Caco-2 (cell line): ENCODE measurements at regions of chr22 and their contacts with region 1.

Region 1: DNA sequence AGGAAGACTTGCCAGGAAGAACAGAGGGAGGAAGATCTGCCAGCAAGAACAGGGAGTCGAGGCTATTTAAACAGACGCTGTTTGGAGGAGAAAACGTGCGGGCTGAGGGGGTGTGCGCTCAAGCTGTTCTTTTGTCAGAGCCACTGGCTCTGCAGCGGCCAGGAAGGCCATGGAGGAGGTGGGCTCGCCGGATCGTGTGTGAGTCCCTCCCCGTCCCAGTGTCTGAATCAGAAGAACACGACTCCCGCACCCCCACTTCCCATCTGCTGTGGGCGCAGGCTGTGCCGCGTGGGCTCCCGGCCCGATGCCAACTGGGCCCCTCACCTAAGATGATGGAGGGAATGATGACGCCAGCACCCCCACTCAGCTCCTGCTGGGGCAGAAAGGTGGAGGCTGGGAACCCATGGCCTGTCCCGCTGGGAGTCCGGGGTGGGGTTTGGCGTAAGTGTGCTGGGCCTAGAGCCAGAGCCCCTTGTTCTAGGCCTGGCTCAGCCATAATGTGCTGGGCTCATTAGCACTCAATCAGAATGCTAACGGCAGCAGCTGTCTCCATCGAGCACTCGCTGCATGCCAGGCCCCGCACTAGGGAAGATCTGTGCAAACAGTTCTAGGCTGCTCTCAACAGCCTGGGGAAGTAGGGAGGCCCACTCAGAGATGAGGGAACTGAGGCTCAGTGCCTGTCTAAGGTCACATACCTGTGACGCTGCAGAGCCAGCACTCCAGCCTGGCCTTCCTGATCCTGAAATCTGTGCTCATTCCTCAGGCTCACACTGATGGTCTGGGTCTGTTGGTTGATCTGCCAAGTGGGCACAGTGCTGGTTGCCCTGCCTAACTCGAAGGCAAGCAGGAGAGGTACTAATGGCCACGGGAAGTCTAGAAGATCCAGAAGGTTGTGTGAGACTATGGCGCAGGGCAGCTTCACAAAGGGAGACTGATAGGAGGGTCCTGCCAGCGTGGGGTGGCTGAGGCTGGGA is 11.5 kb downstream of the NPTXR start:
- DNase-seq: peak in 1 of 2 experiments; percentile 17
- H3K4me3 ChIP-seq: no peak overlapping the region
- H3K4me3 Mint-ChIP-seq: no peak overlapping the region
- H3K27ac Mint-ChIP-seq: no peak overlapping the region
- H3K4me1 ChIP-seq: no peaks in the 10 kb centered on the region
- H3K4me1 Mint-ChIP-seq: no peaks in the 10 kb centered on the region
- H3K27me3 ChIP-seq: no peaks in the 10 kb centered on the region
- H3K27me3 Mint-ChIP-seq: no peaks in the 10 kb centered on the region
- CTCF ChIP-seq: no peak

Region 2: GRCh38 chr22:39135090-39135896 is 303.0 kb after region 1 on chr22:
- CTCF ChIA-PET with region 1: no interaction called
- POLR2A ChIA-PET with region 1: interaction called, 10 read pairs
- intact Hi-C with region 1: no loop called
- DNase-seq: peak; percentile 68 to 81
- H3K4me3 ChIP-seq: no peak overlapping the region
- H3K4me3 Mint-ChIP-seq: no peak overlapping the region
- H3K27ac Mint-ChIP-seq: no peak overlapping the region
- H3K4me1 ChIP-seq: peaks cover 13% of the 10 kb centered on the region
- H3K4me1 Mint-ChIP-seq: peaks cover 7% of the 10 kb centered on the region
- H3K27me3 ChIP-seq: no peaks in the 10 kb centered on the region
- H3K27me3 Mint-ChIP-seq: no peaks in the 10 kb centered on the region
- CTCF ChIP-seq: peak; percentile 76 to 83